ENCODE measurements at regions of chr3 and their contacts with region 1.

Region 1: GRCh38 chr3:73100741-73101559 is 39.5 kb downstream of the EBLN2 start:
- DNase-seq: peak; percentile 88
- H3K4me3 ChIP-seq: no peak overlapping the region
- H3K27ac ChIP-seq: no peak overlapping the region
- H3K4me1 ChIP-seq: peaks cover 0 to 4% (median 2%) of the 10 kb centered on the region in 4 donors
- H3K27me3 ChIP-seq: no peaks in the 10 kb centered on the region
- CTCF ChIP-seq: peak; percentile 90 to 96 (median 95)
- EP300 ChIP-seq: no peak
- POLR2A ChIP-seq: no peak

Region 2: GRCh38 chr3:72887343-72887704 is 213.6 kb before region 1 on chr3:
- in situ Hi-C with region 1: no loop called
- intact Hi-C with region 1: no loop called
- DNase-seq: no peak
- H3K4me3 ChIP-seq: peak overlapping the region; percentile 14 to 57 (median 46)
- H3K27ac ChIP-seq: peak overlapping the region; percentile 48 to 75 (median 61)
- H3K4me1 ChIP-seq: peaks cover 9 to 49% (median 30%) of the 10 kb centered on the region in 4 donors
- H3K27me3 ChIP-seq: no peaks in the 10 kb centered on the region
- CTCF ChIP-seq: no peak
- EP300 ChIP-seq: no peak
- POLR2A ChIP-seq: no peak

Region 3: GRCh38 chr3:73215281-73215680 is 114.3 kb after region 1 on chr3:
- in situ Hi-C with region 1: loop called in 1 of 4 experiments (anchors 25 kb)
- intact Hi-C with region 1: no loop called
- DNase-seq: no peak
- H3K4me3 ChIP-seq: no peak overlapping the region
- H3K27ac ChIP-seq: no peak overlapping the region
- H3K4me1 ChIP-seq: no peaks in the 10 kb centered on the region
- H3K27me3 ChIP-seq: no peaks in the 10 kb centered on the region
- CTCF ChIP-seq: no peak
- EP300 ChIP-seq: no peak
- POLR2A ChIP-seq: no peak

Region 4: GRCh38 chr3:73432023-73432705 is 331.2 kb after region 1 on chr3:
- in situ Hi-C with region 1: loop called in 2 of 4 experiments (anchors 10 to 25 kb)
- intact Hi-C with region 1: loop called (anchors 5 kb)
- DNase-seq: no peak
- H3K4me3 ChIP-seq: no peak overlapping the region
- H3K27ac ChIP-seq: peak overlapping the region; percentile 8 to 56 (median 30)
- H3K4me1 ChIP-seq: peaks cover 0 to 31% (median 6%) of the 10 kb centered on the region in 4 donors
- H3K27me3 ChIP-seq: no peaks in the 10 kb centered on the region
- CTCF ChIP-seq: peak; percentile 59 to 72 (median 72)
- EP300 ChIP-seq: no peak
- POLR2A ChIP-seq: no peak

Region 5: GRCh38 chr3:73490453-73491286 is 389.7 kb after region 1 on chr3:
- in situ Hi-C with region 1: loop called in 3 of 4 experiments (anchors 5 to 10 kb)
- intact Hi-C with region 1: no loop called
- DNase-seq: no peak
- H3K4me3 ChIP-seq: no peak overlapping the region
- H3K27ac ChIP-seq: no peak overlapping the region
- H3K4me1 ChIP-seq: peaks cover 0 to 22% (median 8%) of the 10 kb centered on the region in 4 donors
- H3K27me3 ChIP-seq: no peaks in the 10 kb centered on the region
- CTCF ChIP-seq: no peak
- EP300 ChIP-seq: no peak
- POLR2A ChIP-seq: no peak

Region 6: GRCh38 chr3:73502609-73503583 is 401.9 kb after region 1 on chr3:
- in situ Hi-C with region 1: loop called (anchors 5 to 10 kb)
- intact Hi-C with region 1: loop called (anchors 2 kb)
- DNase-seq: peak; percentile 75
- H3K4me3 ChIP-seq: no peak overlapping the region
- H3K27ac ChIP-seq: peak overlapping the region; percentile 15 to 35 (median 32)
- H3K4me1 ChIP-seq: peaks cover 10 to 28% (median 14%) of the 10 kb centered on the region in 4 donors
- H3K27me3 ChIP-seq: no peaks in the 10 kb centered on the region
- CTCF ChIP-seq: peak; percentile 77 to 87 (median 79)
- EP300 ChIP-seq: no peak
- POLR2A ChIP-seq: no peak

Region 7: GRCh38 chr3:73848173-73848906 is 747.4 kb after region 1 on chr3:
- in situ Hi-C with region 1: loop called (anchors 25 kb)
- intact Hi-C with region 1: loop called (anchors 5 kb)
- DNase-seq: no peak
- H3K4me3 ChIP-seq: no peak overlapping the region
- H3K27ac ChIP-seq: no peak overlapping the region
- H3K4me1 ChIP-seq: no peaks in the 10 kb centered on the region
- H3K27me3 ChIP-seq: no peaks in the 10 kb centered on the region
- CTCF ChIP-seq: peak; percentile 61 to 72 (median 63)
- EP300 ChIP-seq: no peak
- POLR2A ChIP-seq: no peak

Region 8: DNA sequence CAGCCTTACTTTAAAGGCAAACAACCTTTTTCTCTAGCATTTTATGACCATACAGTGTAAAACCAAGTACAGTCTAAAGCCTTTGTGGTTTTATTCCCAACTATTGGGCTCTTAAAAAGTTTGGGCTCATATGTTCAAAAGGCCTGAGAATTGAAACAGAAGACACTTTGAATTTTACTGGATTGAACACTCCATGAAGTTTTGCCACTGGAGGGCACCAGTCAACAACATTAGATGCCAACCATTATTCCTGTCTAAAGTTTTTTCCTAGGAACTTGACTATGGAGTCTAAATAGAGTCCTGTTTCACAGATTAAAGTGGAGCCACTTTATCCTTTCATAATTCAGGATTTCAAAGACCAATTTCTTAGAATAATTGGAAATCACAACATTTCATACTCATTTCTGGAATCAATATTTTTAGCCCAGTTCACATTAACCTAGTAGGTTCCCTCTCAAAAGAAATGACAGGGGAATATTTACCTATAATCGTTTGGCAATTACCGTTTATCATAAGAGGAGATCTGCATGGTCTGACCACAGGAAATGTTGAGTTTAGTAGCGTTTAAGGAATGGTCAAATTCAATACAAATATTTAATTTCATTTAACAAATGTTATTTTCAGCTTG is 767.9 kb after region 1 on chr3:
- in situ Hi-C with region 1: loop called (anchors 25 kb)
- intact Hi-C with region 1: no loop called
- DNase-seq: peak; percentile 24
- H3K4me3 ChIP-seq: no peak overlapping the region
- H3K27ac ChIP-seq: no peak overlapping the region
- H3K4me1 ChIP-seq: no peaks in the 10 kb centered on the region
- H3K27me3 ChIP-seq: no peaks in the 10 kb centered on the region
- CTCF ChIP-seq: peak; percentile 49 to 60 (median 51)
- EP300 ChIP-seq: no peak
- POLR2A ChIP-seq: no peak